Activated CD8-positive, alpha-beta T cell treated with anti-CD3 and anti-CD28 coated beads, Interleukin-2, amount 10 ng/mL, durations not matched to agents 7 days and 5 days (primary cell): ENCODE measurements at regions of chr1 and their contacts with region 1.

Region 1: GRCh38 chr1:35557292-35558063 is at the starts of genes KIAA0319L and NCDN:
- DNase-seq: peak; percentile 98
- ATAC-seq: peak; percentile 95
- H3K4me3 Mint-ChIP-seq: peak within 1 kb of the TSS; percentile 96
- H3K27ac Mint-ChIP-seq: peak within 1 kb of the TSS; percentile 98
- H3K4me1 Mint-ChIP-seq: peaks cover 46% of the 10 kb centered on the region
- H3K27me3 Mint-ChIP-seq: no peaks in the 10 kb centered on the region
- total RNA-seq, gene KIAA0319L: 27.0 to 36.1 TPM
- total RNA-seq, gene NCDN: 19.3 to 19.4 TPM

Region 2: DNA sequence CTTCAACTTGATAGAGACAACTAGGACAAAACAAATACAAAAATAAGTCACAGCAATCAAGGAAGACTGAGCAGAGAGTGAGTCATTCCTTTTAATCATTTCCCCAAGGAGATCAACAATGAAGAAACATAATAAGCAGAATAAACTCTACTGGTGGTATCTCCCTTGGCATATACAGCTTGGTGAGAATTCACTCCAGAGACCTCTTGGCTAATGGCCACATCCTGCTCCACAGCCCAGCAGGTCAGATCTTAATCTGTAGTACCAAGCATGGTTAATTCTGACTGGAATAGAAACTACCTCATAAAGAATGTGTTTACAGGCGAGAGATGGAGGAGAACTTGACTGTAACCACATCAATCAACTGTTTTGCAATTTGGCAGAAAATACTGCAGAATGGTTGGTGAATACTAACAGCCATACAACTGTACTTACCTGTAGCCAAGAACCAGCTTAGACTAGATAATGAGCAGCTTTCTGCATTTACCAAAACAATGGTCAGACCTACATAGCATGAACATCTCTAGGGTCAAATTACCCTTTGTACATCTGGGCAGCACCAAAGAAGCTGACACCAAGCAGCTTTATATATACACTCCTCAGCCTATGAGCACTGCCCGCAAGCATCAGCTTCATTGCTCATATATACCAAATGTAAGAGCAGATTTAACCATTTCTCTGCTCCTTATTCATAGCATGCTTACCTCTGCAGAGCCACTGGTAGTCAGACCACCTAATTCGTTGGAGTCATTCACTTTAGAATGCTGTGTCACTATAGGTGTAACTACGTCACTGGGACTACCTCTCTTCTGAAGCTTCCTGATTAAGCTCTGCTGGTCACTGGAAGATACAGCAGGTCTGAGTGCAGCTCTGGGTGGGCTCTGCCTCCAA is 51.3 kb before region 1 on chr1:
- CTCF ChIA-PET with region 1: interaction called, 6 read pairs
- POLR2A ChIA-PET with region 1: interaction called, 10 read pairs
- DNase-seq: peak; percentile 78
- ATAC-seq: peak; percentile 92
- H3K4me3 Mint-ChIP-seq: peak overlapping the region; percentile 59
- H3K27ac Mint-ChIP-seq: peak overlapping the region; percentile 84
- H3K4me1 Mint-ChIP-seq: peaks cover 56% of the 10 kb centered on the region
- H3K27me3 Mint-ChIP-seq: no peaks in the 10 kb centered on the region

Region 3: DNA sequence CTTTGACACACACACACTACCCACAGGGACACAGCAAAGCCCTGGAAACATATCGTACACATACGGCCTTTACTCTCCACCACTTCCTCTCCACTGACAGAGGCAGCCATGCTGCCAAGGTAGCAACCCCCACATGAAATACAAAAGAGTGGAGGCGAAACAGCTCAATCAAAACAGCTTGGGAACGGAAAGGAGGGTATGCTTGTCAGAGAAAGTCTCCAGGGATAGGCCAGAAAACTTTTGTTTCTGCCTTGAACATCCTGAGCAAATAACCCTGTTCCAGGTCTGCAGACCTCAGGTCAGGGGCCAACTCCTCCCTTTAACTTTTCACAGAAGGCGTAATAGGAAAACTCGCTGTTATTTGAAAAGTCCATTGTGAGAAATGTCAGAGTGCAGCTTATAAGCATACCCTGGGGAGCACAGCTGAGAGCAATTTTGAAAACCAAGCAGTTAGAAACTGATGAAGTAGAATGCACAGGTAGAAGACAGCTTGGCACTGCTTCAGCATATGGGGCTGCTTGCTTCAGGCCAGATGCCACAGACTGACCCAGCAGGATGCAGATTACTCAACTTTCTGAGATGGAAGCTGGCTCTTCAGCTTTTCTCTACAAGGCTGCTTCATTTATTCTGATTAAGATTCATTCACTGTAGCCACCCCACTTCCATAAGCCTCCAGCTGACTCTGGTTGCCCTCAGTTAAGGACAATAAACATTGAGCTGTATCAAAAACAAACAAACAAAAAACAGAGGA is 18.2 kb before region 1 on chr1:
- CTCF ChIA-PET with region 1: no interaction called
- POLR2A ChIA-PET with region 1: interaction called, 19 read pairs
- DNase-seq: peak; percentile 71
- ATAC-seq: peak; percentile 95
- H3K4me3 Mint-ChIP-seq: peak overlapping the region; percentile 64
- H3K27ac Mint-ChIP-seq: peak overlapping the region; percentile 94
- H3K4me1 Mint-ChIP-seq: peaks cover 49% of the 10 kb centered on the region
- H3K27me3 Mint-ChIP-seq: no peaks in the 10 kb centered on the region

Region 4: GRCh38 chr1:35577071-35577998 is 19.9 kb after region 1 on chr1:
- CTCF ChIA-PET with region 1: no interaction called
- POLR2A ChIA-PET with region 1: interaction called, 10 read pairs
- DNase-seq: peak; percentile 85
- ATAC-seq: peak; percentile 87
- H3K4me3 Mint-ChIP-seq: peak overlapping the region; percentile 81
- H3K27ac Mint-ChIP-seq: peak overlapping the region; percentile 94
- H3K4me1 Mint-ChIP-seq: peaks cover 34% of the 10 kb centered on the region
- H3K27me3 Mint-ChIP-seq: peaks cover 8% of the 10 kb centered on the region

Region 5: DNA sequence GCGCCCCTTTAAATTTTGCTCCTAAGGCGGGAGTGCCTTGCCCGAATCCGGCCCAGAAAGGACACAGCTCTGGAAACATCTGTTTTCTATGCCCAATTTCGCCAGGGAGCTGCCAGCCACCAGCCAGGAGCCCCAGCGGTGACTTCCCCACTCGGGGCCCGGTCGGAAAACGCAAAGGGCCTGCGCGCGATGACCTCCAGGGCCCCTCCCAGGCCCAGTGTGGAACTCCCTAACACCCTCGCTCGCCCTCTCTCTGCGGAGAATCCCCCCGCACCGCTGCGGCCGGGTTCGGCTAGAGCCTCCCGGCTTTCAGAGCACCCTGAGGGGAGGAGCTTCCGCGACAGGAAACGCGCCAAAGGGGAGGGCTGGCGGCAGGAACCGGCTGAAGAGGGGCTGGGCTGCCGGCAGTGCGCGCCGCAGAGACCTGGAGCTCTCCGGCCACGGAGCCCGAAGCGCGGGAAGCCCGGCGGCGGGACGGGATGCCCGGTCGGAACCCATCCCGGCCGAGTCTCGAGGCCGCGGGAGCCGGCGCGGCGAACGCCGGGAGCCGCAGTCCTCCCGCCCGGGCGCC is 211.8 kb after region 1 on chr1:
- CTCF ChIA-PET with region 1: no interaction called
- POLR2A ChIA-PET with region 1: interaction called, 10 read pairs
- DNase-seq: peak; percentile 93
- ATAC-seq: peak; percentile 87
- H3K4me3 Mint-ChIP-seq: peak overlapping the region; percentile 97
- H3K27ac Mint-ChIP-seq: peak overlapping the region; percentile 84
- H3K4me1 Mint-ChIP-seq: peaks cover 27% of the 10 kb centered on the region
- H3K27me3 Mint-ChIP-seq: no peaks in the 10 kb centered on the region